Activated CD8-positive, alpha-beta T cell treated with anti-CD3 and anti-CD28 coated beads for 36 hours (primary cell): ENCODE measurements at regions of chr15 and their contacts with region 1.

Region 1: GRCh38 chr15:59917504-59918157 is 86.5 kb upstream of the FOXB1 start:
- DNase-seq: peak; percentile 89
- ATAC-seq: peak; percentile 68
- H3K4me3 Mint-ChIP-seq: no peak overlapping the region
- H3K27ac Mint-ChIP-seq: peak overlapping the region; percentile 34
- H3K4me1 Mint-ChIP-seq: peaks cover 28% of the 10 kb centered on the region
- H3K27me3 Mint-ChIP-seq: peaks cover 7% of the 10 kb centered on the region
- CTCF ChIP-seq: peak; percentile 78

Region 2: DNA sequence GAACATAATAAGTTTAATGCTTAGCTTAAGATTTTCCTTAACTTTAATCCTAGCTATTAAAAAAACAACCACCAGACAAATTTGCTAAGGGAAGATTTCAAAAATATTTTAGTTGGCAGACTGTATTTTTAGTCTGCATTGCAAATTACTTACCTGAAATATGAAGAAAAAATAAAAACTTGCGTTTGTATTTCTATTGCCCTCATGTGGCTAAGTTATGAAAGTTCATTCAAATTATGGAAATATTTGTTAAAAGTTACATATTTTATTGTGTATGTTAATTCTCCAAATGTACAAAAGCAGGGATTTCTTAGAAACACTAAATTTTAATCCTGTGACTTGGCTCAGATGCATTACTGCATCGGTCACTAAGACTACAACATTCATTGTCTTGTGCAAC is 275.3 kb before region 1 on chr15:
- CTCF ChIA-PET with region 1: no interaction called
- POLR2A ChIA-PET with region 1: no interaction called
- intact Hi-C with region 1: no loop called
- DNase-seq: no peak
- ATAC-seq: no peak
- H3K4me3 Mint-ChIP-seq: no peak overlapping the region
- H3K27ac Mint-ChIP-seq: peak overlapping the region; percentile 1
- H3K4me1 Mint-ChIP-seq: peaks cover 11% of the 10 kb centered on the region
- H3K27me3 Mint-ChIP-seq: no peaks in the 10 kb centered on the region
- CTCF ChIP-seq: no peak

Region 3: DNA sequence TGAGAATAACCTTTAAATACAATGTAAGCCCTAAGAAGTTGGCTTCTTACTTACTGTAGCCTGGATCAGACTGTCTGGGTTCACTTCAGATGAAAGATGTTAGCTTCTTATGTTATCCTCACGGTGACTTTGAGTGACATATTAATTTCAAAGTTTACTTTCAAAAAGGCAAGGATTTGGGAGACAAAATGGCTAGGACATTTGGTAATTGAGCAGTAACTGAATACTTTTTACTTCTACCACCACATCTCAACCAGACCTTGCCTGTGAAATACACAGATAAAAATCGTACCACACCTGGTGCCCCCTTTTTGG is 192.5 kb before region 1 on chr15:
- CTCF ChIA-PET with region 1: interaction called, 23 read pairs
- POLR2A ChIA-PET with region 1: no interaction called
- intact Hi-C with region 1: no loop called
- DNase-seq: no peak
- ATAC-seq: no peak
- H3K4me3 Mint-ChIP-seq: no peak overlapping the region
- H3K27ac Mint-ChIP-seq: no peak overlapping the region
- H3K4me1 Mint-ChIP-seq: peaks cover 3% of the 10 kb centered on the region
- H3K27me3 Mint-ChIP-seq: peaks cover 2% of the 10 kb centered on the region
- CTCF ChIP-seq: peak; percentile 15

Region 4: GRCh38 chr15:59751552-59752413 is 165.8 kb before region 1 on chr15:
- CTCF ChIA-PET with region 1: interaction called, 14 read pairs
- POLR2A ChIA-PET with region 1: no interaction called
- intact Hi-C with region 1: no loop called
- DNase-seq: no peak
- ATAC-seq: peak; percentile 91
- H3K4me3 Mint-ChIP-seq: no peak overlapping the region
- H3K27ac Mint-ChIP-seq: no peak overlapping the region
- H3K4me1 Mint-ChIP-seq: peaks cover 7% of the 10 kb centered on the region
- H3K27me3 Mint-ChIP-seq: peaks cover 2% of the 10 kb centered on the region
- CTCF ChIP-seq: peak; percentile 68

Region 5: DNA sequence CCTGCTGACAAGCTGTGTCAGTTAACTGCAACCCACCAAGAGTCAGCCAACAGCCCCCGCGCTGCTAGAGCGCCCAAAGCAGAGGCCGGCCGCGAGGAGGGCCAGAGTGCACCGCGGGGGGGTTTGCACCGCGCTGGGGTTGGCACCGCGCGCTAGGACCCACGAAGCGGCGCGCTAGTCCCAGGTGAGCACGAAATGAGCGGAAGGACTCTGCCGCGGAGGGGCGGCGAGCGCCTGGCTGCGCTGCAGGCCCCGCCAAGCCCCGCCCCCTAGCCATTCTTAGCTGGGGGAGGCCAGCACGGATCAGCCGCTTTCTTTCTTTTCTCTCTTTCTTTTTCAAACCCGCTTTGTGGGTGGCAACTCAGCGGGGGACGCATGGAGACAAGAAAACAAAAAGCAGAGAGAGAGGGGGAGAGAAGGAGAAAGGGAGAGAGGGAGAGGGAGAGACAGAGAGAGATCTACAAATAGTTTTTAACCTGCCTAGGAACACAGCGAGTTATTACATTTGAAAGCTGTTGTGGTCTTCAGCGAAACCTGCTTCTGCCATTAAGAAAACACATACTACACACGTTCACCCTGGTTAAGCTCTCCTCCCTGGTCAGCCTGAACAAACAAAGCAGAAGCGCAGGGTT is 79.6 kb after region 1 on chr15:
- CTCF ChIA-PET with region 1: interaction called, 22 read pairs
- POLR2A ChIA-PET with region 1: interaction called, 4 read pairs
- intact Hi-C with region 1: loop called (anchors 5 kb)
- DNase-seq: peak; percentile 86
- ATAC-seq: peak; percentile 90
- H3K4me3 Mint-ChIP-seq: peak overlapping the region; percentile 77
- H3K27ac Mint-ChIP-seq: peak overlapping the region; percentile 76
- H3K4me1 Mint-ChIP-seq: peaks cover 42% of the 10 kb centered on the region
- H3K27me3 Mint-ChIP-seq: peaks cover 92% of the 10 kb centered on the region
- CTCF ChIP-seq: no peak

Region 6: DNA sequence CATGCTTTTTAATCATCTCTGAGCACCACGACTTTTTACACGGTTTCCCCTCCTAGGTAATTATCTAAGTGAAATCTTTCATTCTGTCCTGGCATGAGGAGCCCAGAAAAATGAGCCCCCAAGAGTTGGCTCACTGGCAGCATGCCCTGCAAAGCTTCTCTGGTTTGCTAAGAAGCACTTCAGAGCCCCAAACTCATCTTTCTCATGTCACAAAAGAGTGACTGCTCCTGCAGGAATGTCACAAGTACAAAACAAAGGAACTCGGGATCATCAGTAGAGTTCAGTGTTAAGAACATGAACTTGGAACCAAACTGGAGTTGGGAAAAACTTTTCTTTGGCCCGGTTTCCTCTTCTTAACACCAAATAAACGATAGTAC is 210.4 kb after region 1 on chr15:
- CTCF ChIA-PET with region 1: interaction called, 3 read pairs
- POLR2A ChIA-PET with region 1: no interaction called
- intact Hi-C with region 1: loop called (anchors 10 kb)
- DNase-seq: no peak
- ATAC-seq: no peak
- H3K4me3 Mint-ChIP-seq: peak overlapping the region; percentile 76
- H3K27ac Mint-ChIP-seq: peak overlapping the region; percentile 78
- H3K4me1 Mint-ChIP-seq: peaks cover 39% of the 10 kb centered on the region
- H3K27me3 Mint-ChIP-seq: no peaks in the 10 kb centered on the region
- CTCF ChIP-seq: no peak

Region 7: GRCh38 chr15:60326824-60327654 is 409.4 kb after region 1 on chr15:
- CTCF ChIA-PET with region 1: interaction called, 33 read pairs
- POLR2A ChIA-PET with region 1: no interaction called
- intact Hi-C with region 1: loop called (anchors 10 kb)
- DNase-seq: peak; percentile 47
- ATAC-seq: peak; percentile 39
- H3K4me3 Mint-ChIP-seq: no peak overlapping the region
- H3K27ac Mint-ChIP-seq: no peak overlapping the region
- H3K4me1 Mint-ChIP-seq: no peaks in the 10 kb centered on the region
- H3K27me3 Mint-ChIP-seq: peaks cover 26% of the 10 kb centered on the region
- CTCF ChIP-seq: peak; percentile 92